Caco-2 (cell line): ENCODE measurements at regions of chr11 and their contacts with region 1.

Region 1: GRCh38 chr11:2137202-2138071 is 1.8 kb downstream of the IGF2 start:
- DNase-seq: peak; percentile 91 to 94
- H3K4me3 ChIP-seq: peak overlapping the region; percentile 78
- H3K4me3 Mint-ChIP-seq: peak overlapping the region; percentile 84
- H3K27ac Mint-ChIP-seq: peak overlapping the region; percentile 30
- H3K4me1 ChIP-seq: peaks cover 19% of the 10 kb centered on the region
- H3K4me1 Mint-ChIP-seq: peaks cover 18% of the 10 kb centered on the region
- H3K27me3 ChIP-seq: no peaks in the 10 kb centered on the region; the same call in 1 of the 2 replicates
- H3K27me3 Mint-ChIP-seq: peaks cover 15% of the 10 kb centered on the region
- CTCF ChIP-seq: peak in 1 of 2 experiments; percentile 0

Region 2: GRCh38 chr11:1458340-1459218 is 678.9 kb before region 1 on chr11:
- CTCF ChIA-PET with region 1: no interaction called
- POLR2A ChIA-PET with region 1: no interaction called
- intact Hi-C with region 1: no loop called
- DNase-seq: peak; percentile 48 to 61
- H3K4me3 ChIP-seq: no peak overlapping the region
- H3K4me3 Mint-ChIP-seq: no peak overlapping the region
- H3K27ac Mint-ChIP-seq: peak overlapping the region; percentile 19
- H3K4me1 ChIP-seq: no peaks in the 10 kb centered on the region
- H3K4me1 Mint-ChIP-seq: no peaks in the 10 kb centered on the region
- H3K27me3 ChIP-seq: no peaks in the 10 kb centered on the region
- H3K27me3 Mint-ChIP-seq: no peaks in the 10 kb centered on the region
- CTCF ChIP-seq: peak; percentile 19 to 29

Region 3: GRCh38 chr11:1970956-1971355 is 166.5 kb before region 1 on chr11:
- CTCF ChIA-PET with region 1: no interaction called
- POLR2A ChIA-PET with region 1: no interaction called
- intact Hi-C with region 1: no loop called
- DNase-seq: no peak
- H3K4me3 ChIP-seq: no peak overlapping the region
- H3K4me3 Mint-ChIP-seq: no peak overlapping the region
- H3K27ac Mint-ChIP-seq: no peak overlapping the region
- H3K4me1 ChIP-seq: no peaks in the 10 kb centered on the region
- H3K4me1 Mint-ChIP-seq: no peaks in the 10 kb centered on the region
- H3K27me3 ChIP-seq: no peaks in the 10 kb centered on the region
- H3K27me3 Mint-ChIP-seq: no peaks in the 10 kb centered on the region
- CTCF ChIP-seq: no peak

Region 4: GRCh38 chr11:2157294-2158040 is 20.0 kb after region 1 on chr11:
- CTCF ChIA-PET with region 1: interaction called, 28 read pairs
- POLR2A ChIA-PET with region 1: interaction called, 5 read pairs
- intact Hi-C with region 1: no loop called
- DNase-seq: no peak
- H3K4me3 ChIP-seq: no peak overlapping the region
- H3K4me3 Mint-ChIP-seq: no peak overlapping the region
- H3K27ac Mint-ChIP-seq: no peak overlapping the region
- H3K4me1 ChIP-seq: no peaks in the 10 kb centered on the region
- H3K4me1 Mint-ChIP-seq: no peaks in the 10 kb centered on the region
- H3K27me3 ChIP-seq: no peaks in the 10 kb centered on the region
- H3K27me3 Mint-ChIP-seq: no peaks in the 10 kb centered on the region
- CTCF ChIP-seq: no peak

Region 5: GRCh38 chr11:2233693-2234455 is 96.4 kb after region 1 on chr11:
- CTCF ChIA-PET with region 1: no interaction called
- POLR2A ChIA-PET with region 1: no interaction called
- intact Hi-C with region 1: no loop called
- DNase-seq: no peak
- H3K4me3 ChIP-seq: no peak overlapping the region
- H3K4me3 Mint-ChIP-seq: no peak overlapping the region
- H3K27ac Mint-ChIP-seq: no peak overlapping the region
- H3K4me1 ChIP-seq: no peaks in the 10 kb centered on the region
- H3K4me1 Mint-ChIP-seq: no peaks in the 10 kb centered on the region
- H3K27me3 ChIP-seq: no peaks in the 10 kb centered on the region
- H3K27me3 Mint-ChIP-seq: no peaks in the 10 kb centered on the region
- CTCF ChIP-seq: no peak